ENCODE measurements at regions of chr15 and their contacts with region 1.

Region 1: GRCh38 chr15:75928680-75929608 is 25.3 kb downstream of the FBXO22 start:
- DNase-seq: peak; percentile 66
- ATAC-seq: peak; percentile 86
- H3K4me3 Mint-ChIP-seq: no peak overlapping the region
- H3K27ac Mint-ChIP-seq: peak overlapping the region; percentile 82
- H3K4me1 Mint-ChIP-seq: peaks cover 44% of the 10 kb centered on the region
- H3K27me3 Mint-ChIP-seq: no peaks in the 10 kb centered on the region
- CTCF ChIP-seq: peak; percentile 19

Region 2: DNA sequence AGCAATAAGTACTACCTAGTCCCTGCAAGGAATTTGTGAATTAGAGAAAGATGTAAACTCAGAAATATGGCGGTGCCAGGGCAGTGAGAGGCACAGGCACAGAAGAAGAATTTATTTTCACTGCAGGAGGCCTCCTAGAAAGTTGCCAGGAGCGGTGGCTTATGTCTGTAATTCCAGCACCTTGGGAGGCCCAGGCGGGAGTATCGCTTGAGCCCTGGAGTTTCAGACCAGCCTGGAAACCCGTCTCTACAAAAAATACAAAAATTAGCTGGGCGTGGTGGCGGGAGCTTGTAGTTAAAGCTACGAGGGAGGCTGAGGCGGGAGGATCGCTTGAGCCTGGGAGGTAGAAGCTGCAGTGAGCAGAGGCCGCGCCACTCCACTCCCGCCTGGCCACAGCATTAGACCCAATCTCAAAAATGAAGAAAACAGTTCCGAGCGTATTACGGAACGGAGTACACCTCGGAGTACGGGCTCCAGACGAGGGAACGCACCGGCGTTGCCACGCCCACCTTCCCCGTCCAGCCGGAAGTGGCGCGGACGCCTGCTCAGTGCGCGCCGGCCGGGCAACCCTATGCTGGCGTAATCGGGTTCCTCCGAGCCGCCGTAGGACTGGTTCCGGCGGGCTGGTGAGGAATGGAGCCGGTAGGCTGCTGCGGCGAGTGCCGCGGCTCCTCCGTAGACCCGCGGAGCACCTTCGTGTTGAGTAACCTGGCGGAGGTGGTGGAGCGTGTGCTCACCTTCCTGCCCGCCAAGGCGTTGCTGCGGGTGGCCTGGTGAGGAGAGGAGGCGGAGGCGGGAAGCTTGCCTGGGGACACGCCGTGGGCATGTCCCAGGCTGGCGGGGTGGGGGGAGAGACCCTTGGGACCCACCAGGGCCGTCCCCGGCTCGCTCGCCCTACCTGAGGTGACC is 25.4 kb before region 1 on chr15 and contains the start of gene FBXO22:
- CTCF ChIA-PET with region 1: interaction called, 12 read pairs
- POLR2A ChIA-PET with region 1: interaction called, 4 read pairs
- DNase-seq: peak; percentile 96
- ATAC-seq: peak; percentile 90
- H3K4me3 Mint-ChIP-seq: peak within 1 kb of the TSS; percentile 99
- H3K27ac Mint-ChIP-seq: peak within 1 kb of the TSS; percentile 100
- H3K4me1 Mint-ChIP-seq: peaks cover 45% of the 10 kb centered on the region
- H3K27me3 Mint-ChIP-seq: no peaks in the 10 kb centered on the region
- CTCF ChIP-seq: no peak
- total RNA-seq, gene FBXO22: 90.3 to 95.7 TPM (median 90.9 TPM) in 3 replicates

Region 3: DNA sequence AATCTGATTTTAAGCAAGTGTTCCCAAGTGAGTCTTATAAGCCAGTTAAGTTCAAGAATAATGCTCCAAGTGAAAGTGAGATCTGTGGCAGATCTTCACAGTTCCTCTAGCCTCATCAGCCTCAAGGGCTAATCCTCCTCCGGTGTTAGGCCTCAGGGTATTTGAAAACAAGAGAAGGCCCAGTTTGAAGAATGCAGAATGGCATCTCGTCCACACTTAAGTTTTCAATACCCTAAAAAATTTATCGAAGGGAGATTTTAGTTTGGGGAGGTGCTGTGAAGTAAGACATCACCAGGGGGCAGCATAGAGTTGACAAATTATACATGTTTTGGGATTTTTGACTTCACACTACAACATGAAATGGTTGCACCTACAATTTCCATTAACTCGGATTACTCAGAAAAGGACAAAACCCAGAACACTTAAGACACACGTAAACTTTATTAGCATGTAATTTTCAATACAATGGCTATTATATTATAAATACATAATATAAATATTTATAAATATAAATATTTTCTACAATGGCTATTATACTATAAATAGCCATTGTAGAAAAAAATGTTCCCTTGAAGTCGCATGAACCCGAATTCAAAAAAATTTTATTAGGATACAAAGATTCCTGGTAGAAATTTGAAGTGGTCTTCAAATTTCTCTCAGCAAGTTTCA is 128.5 kb after region 1 on chr15:
- CTCF ChIA-PET with region 1: interaction called, 12 read pairs
- POLR2A ChIA-PET with region 1: no interaction called
- DNase-seq: peak; percentile 26
- ATAC-seq: no peak
- H3K4me3 Mint-ChIP-seq: peak overlapping the region; percentile 35
- H3K27ac Mint-ChIP-seq: no peak overlapping the region
- H3K4me1 Mint-ChIP-seq: peaks cover 39% of the 10 kb centered on the region
- H3K27me3 Mint-ChIP-seq: peaks cover 16% of the 10 kb centered on the region
- CTCF ChIP-seq: peak; percentile 59

Region 4: GRCh38 chr15:76150971-76151598 is 222.1 kb after region 1 on chr15:
- CTCF ChIA-PET with region 1: interaction called, 19 read pairs
- POLR2A ChIA-PET with region 1: no interaction called
- DNase-seq: peak; percentile 90
- ATAC-seq: peak; percentile 83
- H3K4me3 Mint-ChIP-seq: peak overlapping the region; percentile 24
- H3K27ac Mint-ChIP-seq: peak overlapping the region; percentile 79
- H3K4me1 Mint-ChIP-seq: peaks cover 47% of the 10 kb centered on the region
- H3K27me3 Mint-ChIP-seq: no peaks in the 10 kb centered on the region
- CTCF ChIP-seq: peak; percentile 92

Measured in WTC11 (cell line).